Aorta (tissue), 5 donors: ENCODE measurements at regions of chr5 and their contacts with region 1.

Region 1: GRCh38 chr5:134465816-134466240 is 54.1 kb upstream of the CDKN2AIPNL start:
- DNase-seq: peak; percentile 92 to 95
- ATAC-seq: peak; percentile 94
- H3K4me3 ChIP-seq: peak overlapping the region in 1 of 2 donors; percentile 12
- H3K27ac ChIP-seq: peak overlapping the region; percentile 72 to 90
- H3K4me1 ChIP-seq: no peaks in the 10 kb centered on the region
- H3K27me3 ChIP-seq: no peaks in the 10 kb centered on the region

Region 2: DNA sequence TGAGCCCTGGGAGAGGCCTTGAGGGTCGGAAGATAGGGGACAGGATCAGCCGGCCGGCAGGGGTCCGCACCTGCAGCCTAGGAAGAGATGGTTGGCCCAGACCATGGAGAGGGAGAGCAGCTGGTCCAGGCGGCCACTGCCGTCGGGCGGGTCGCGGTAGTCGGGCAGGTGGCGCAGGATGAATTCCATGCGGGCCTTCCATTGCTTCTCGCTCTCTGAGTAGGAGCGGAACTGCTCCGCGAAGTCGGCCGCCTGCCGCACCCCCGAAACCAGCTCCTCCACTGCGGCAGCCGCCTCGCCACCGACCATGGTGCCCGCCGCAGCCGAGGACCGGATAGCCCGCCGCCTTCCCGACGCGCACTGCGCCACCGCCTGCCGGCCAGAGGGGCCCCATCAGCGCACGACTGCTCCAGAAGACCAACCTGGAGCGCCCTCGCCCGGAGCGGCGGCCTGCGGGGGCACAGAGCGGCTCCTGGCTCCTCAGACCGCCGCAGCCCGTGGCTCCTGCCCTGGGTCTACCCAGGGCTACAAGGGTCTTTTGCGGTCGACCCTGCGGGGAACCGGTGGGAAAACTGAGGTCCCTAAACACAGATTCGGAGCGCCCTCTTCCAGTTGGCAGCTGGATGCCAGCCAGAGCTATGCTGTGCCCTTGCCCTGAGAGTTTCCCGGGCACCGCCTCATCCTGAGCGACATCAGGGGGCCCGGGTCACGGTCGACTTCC is 54.1 kb before region 1 on chr5 and contains the start of gene CDKN2AIPNL:
- intact Hi-C with region 1: loop called in 1 of 2 experiments (anchors 5 kb)
- DNase-seq: peak; percentile 94 to 98
- ATAC-seq: peak; percentile 98
- H3K4me3 ChIP-seq: peak within 1 kb of the TSS; percentile 60 to 96
- H3K27ac ChIP-seq: peak within 1 kb of the TSS in 1 of 2 donors; percentile 4
- H3K4me1 ChIP-seq: no peaks in the 10 kb centered on the region
- H3K27me3 ChIP-seq: no peaks in the 10 kb centered on the region
- total RNA-seq, gene CDKN2AIPNL: 11.0 to 12.0 TPM

Region 3: DNA sequence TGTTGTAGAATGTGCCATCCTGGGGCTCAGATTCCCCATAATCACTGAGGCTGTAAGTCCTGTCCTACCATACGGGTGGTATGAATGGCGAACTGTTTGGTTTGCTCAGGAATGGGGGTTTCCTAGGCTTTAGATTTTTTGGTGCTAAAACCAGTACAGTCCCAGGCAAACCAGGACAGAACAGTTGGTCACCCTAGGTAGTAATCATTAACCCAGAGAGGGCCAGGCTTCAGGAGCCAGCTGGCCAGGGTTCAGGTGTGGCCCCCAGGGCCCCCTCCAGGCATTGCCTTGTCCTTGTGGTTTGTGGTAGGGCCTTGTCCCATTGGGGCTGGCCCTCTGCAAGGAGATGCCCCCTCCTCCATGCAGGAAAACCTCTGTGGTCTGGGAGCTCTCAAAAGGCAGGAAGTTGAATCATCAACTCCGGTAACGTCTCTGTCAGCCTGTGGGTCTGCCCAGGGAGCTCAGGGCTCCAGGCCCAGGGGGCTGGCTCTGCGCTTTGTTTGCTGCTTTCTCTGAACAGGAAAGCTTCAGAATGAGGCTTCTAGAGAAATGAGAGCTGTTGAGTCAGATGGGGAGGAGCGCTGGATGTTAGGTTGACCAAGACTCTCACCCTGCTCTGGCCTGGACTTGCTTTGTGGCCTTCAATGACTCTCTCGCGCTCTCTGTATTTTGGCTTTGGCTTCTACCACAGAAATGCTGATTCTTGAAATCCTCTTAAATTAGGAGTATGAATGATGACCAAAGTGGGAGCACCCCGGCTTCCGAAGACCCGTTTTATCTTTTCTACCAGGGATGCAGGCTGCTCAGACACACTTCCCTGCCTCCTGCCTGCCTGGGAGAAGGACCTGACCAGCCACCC is 37.5 kb after region 1 on chr5:
- intact Hi-C with region 1: loop called in 1 of 2 experiments (anchors 2 kb)
- DNase-seq: peak; percentile 90 to 91
- ATAC-seq: peak; percentile 83
- H3K4me3 ChIP-seq: no peak overlapping the region
- H3K27ac ChIP-seq: peak overlapping the region in 1 of 2 donors; percentile 11
- H3K4me1 ChIP-seq: no peaks in the 10 kb centered on the region
- H3K27me3 ChIP-seq: no peaks in the 10 kb centered on the region

Region 4: DNA sequence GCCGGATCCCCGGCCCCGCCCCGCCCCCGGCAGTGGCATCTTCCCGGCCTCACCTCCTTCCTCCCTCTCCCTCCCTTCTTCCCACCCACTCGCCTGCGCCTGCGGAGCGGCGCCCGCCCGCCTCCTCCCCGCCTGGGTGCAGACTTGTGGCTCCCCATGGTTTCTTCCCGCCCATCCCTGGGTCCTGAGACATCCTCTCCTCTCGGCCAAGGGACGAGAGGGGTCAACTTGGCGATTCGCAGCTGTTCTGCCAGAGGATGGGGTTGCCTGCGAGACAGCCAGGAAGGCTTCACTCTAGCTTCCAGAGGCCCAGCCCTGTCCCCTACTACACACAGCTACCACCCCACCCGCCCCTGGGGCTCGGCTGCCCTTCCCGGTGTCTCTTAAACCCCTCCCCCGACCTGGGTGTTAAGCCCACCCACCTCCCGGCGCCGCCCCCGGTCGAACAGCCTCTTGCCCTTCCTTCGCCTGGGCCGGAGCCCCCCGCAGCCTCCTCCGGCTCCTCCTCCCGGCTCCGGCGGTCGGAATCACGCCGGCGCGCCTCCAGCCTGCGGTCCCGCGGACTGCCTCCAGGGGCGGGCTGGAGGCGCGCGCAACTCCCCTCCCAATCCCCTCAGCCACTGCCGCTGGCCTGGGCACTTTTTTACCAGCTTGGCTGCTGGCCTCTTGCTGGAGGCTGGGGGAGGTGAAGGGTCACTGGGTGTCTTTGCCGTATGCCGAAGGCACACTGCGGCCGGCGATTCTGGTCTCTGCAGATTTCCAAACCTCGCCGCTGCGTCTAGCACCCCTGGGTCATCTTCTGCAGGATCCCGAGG is 61.5 kb after region 1 on chr5:
- intact Hi-C with region 1: loop called (anchors 5 kb)
- DNase-seq: peak; percentile 92 to 94
- ATAC-seq: peak; percentile 88
- H3K4me3 ChIP-seq: peak overlapping the region; percentile 86 to 94
- H3K27ac ChIP-seq: peak overlapping the region; percentile 1 to 77
- H3K4me1 ChIP-seq: peaks cover 3 to 7% of the 10 kb centered on the region in 2 donors
- H3K27me3 ChIP-seq: no peaks in the 10 kb centered on the region

Region 5: GRCh38 chr5:134577796-134578363 is 112.1 kb after region 1 on chr5:
- intact Hi-C with region 1: loop called in 1 of 2 experiments (anchors 5 kb)
- DNase-seq: peak; percentile 88 to 96
- ATAC-seq: peak; percentile 74
- H3K4me3 ChIP-seq: no peak overlapping the region
- H3K27ac ChIP-seq: no peak overlapping the region
- H3K4me1 ChIP-seq: no peaks in the 10 kb centered on the region
- H3K27me3 ChIP-seq: no peaks in the 10 kb centered on the region